Left ventricle myocardium superior (tissue), 1 donor: ENCODE measurements at regions of chr9 and their contacts with region 1.

Region 1: GRCh38 chr9:92535940-92536850 is at the start of gene ECM2:
- DNase-seq: no peak
- ATAC-seq: peak; percentile 72
- total RNA-seq, gene ECM2: 5.3 TPM

Region 2: GRCh38 chr9:92590377-92590776 is 54.2 kb after region 1 on chr9:
- intact Hi-C with region 1: loop called (anchors 10 kb)
- DNase-seq: peak; percentile 72
- ATAC-seq: peak; percentile 99